Mammary epithelial cell (primary cell): ENCODE measurements at regions of chr20 and their contacts with region 1.

Region 1: DNA sequence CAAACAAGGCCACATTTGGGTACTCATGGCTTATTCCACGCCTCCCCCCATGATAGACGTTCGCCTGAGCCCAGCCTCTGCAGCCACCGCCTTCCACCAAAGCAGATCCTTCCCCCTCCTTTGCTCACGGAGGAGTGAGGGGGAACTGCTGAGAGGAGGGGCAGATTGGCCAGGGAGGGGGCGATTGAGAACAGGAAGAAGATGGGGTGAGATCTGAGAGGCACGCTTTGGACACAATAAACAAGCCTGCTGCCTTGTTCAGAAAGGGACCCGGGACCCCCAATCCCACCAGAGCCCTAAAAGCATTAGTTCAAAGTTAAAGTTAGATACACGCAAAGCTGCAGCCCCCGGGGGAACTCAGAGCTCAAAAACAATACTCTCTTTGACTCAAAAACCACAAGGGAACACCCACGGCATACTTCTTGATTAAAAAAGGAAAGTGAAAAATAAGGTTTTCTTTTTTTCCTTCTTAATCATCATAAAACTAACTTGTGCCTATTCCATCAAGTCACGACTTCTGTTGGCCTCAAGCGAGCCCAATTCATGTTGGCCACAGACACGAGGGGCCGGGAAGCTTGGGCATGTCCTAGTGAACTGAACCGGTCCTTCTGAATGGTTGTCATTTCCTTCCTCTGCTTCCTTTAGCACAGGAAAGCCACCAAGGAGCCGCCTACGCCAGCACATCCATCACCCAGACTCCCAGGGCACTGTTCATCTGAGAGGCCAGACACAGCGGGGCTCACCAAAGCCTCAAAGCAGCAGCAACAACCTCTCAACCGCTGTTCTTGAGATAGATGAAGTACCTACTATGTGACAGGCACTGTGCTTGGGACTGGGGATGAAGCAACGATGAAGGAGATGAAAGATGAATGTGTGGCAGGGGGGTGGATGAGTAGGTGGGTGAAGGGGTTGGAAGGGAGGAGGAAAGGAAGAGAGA is 44.7 kb downstream of the NFATC2 start:
- DNase-seq: peak; percentile 35
- H3K4me3 ChIP-seq: no peak overlapping the region
- H3K27ac ChIP-seq: no peak overlapping the region
- H3K4me1 ChIP-seq: peaks cover 15% of the 10 kb centered on the region
- H3K27me3 ChIP-seq: no peaks in the 10 kb centered on the region
- CTCF ChIP-seq: no peak

Region 2: GRCh38 chr20:51562332-51563155 is 64.7 kb after region 1 on chr20:
- CTCF ChIA-PET with region 1: no interaction called
- dilution Hi-C with region 1: no loop called
- in situ Hi-C with region 1: loop called in 1 of 2 experiments (anchors 10 kb)
- intact Hi-C with region 1: no loop called
- DNase-seq: peak; percentile 75
- H3K4me3 ChIP-seq: peak overlapping the region; percentile 32 to 42 (median 39)
- H3K27ac ChIP-seq: no peak overlapping the region
- H3K4me1 ChIP-seq: peaks cover 23% of the 10 kb centered on the region
- H3K27me3 ChIP-seq: peaks cover 25% of the 10 kb centered on the region
- CTCF ChIP-seq: no peak

Region 3: GRCh38 chr20:52295556-52295955 is 797.7 kb after region 1 on chr20:
- CTCF ChIA-PET with region 1: no interaction called
- dilution Hi-C with region 1: no loop called
- in situ Hi-C with region 1: no loop called
- intact Hi-C with region 1: no loop called
- DNase-seq: no peak
- H3K4me3 ChIP-seq: no peak overlapping the region
- H3K27ac ChIP-seq: no peak overlapping the region
- H3K4me1 ChIP-seq: no peaks in the 10 kb centered on the region
- H3K27me3 ChIP-seq: no peaks in the 10 kb centered on the region
- CTCF ChIP-seq: no peak